Ascending aorta (tissue), 2 donors: ENCODE measurements at regions of chr5 and their contacts with region 1.

Region 1: GRCh38 chr5:15821506-15821905 is 321.5 kb downstream of the FBXL7 start:
- DNase-seq: no peak
- H3K4me3 ChIP-seq: no peak overlapping the region
- H3K27ac ChIP-seq: no peak overlapping the region
- H3K4me1 ChIP-seq: peaks cover 0 to 9% of the 10 kb centered on the region in 2 donors
- H3K27me3 ChIP-seq: no peaks in the 10 kb centered on the region
- CTCF ChIP-seq: no peak

Region 2: GRCh38 chr5:15105796-15106393 is 715.6 kb before region 1 on chr5:
- intact Hi-C with region 1: loop called (anchors 5 kb)
- DNase-seq: peak in 1 of 2 donors; percentile 75
- H3K4me3 ChIP-seq: no peak overlapping the region
- H3K27ac ChIP-seq: no peak overlapping the region
- H3K4me1 ChIP-seq: no peaks in the 10 kb centered on the region
- H3K27me3 ChIP-seq: no peaks in the 10 kb centered on the region
- CTCF ChIP-seq: peak; percentile 47 to 78 (median 64)

Region 3: GRCh38 chr5:15869291-15869690 is 47.8 kb after region 1 on chr5:
- intact Hi-C with region 1: no loop called
- DNase-seq: no peak
- H3K4me3 ChIP-seq: no peak overlapping the region
- H3K27ac ChIP-seq: no peak overlapping the region
- H3K4me1 ChIP-seq: no peaks in the 10 kb centered on the region
- H3K27me3 ChIP-seq: no peaks in the 10 kb centered on the region
- CTCF ChIP-seq: no peak

Region 4: GRCh38 chr5:16372493-16372892 is 551.0 kb after region 1 on chr5:
- intact Hi-C with region 1: no loop called
- DNase-seq: no peak
- H3K4me3 ChIP-seq: no peak overlapping the region
- H3K27ac ChIP-seq: no peak overlapping the region
- H3K4me1 ChIP-seq: no peaks in the 10 kb centered on the region
- H3K27me3 ChIP-seq: no peaks in the 10 kb centered on the region
- CTCF ChIP-seq: no peak